BJ (cell line): ENCODE measurements at regions of chr11 and their contacts with region 1.

Region 1: GRCh38 chr11:119121008-119121810 is at the start of gene HINFP:
- DNase-seq: peak; percentile 96
- H3K4me3 ChIP-seq: peak within 1 kb of the TSS; percentile 89
- H3K27me3 ChIP-seq: no peaks in the 10 kb centered on the region
- CTCF ChIP-seq: no peak
- polyA plus RNA-seq, gene HINFP: 17.6 and 27.3 TPM in 2 replicates

Region 2: GRCh38 chr11:119108857-119109221 is 12.4 kb before region 1 on chr11:
- CTCF ChIA-PET with region 1: interaction called, 11 read pairs
- POLR2A ChIA-PET with region 1: interaction called, 4 read pairs
- DNase-seq: no peak
- H3K4me3 ChIP-seq: no peak overlapping the region
- H3K27me3 ChIP-seq: no peaks in the 10 kb centered on the region
- CTCF ChIP-seq: no peak